GM12878 (cell line): ENCODE measurements at regions of chr22 and their contacts with region 1.

Region 1: GRCh38 chr22:39332441-39333064 is 13.1 kb upstream of the RPL3 start:
- DNase-seq: peak; percentile 36
- ATAC-seq: peak; percentile 93
- H3K4me3 ChIP-seq: no peak overlapping the region
- H3K27ac ChIP-seq: no peak overlapping the region
- H3K4me1 ChIP-seq: no peaks in the 10 kb centered on the region
- H3K27me3 ChIP-seq: no peaks in the 10 kb centered on the region
- CTCF ChIP-seq: no peak
- EP300 ChIP-seq: no peak
- POLR2A ChIP-seq: no peak
- RAD21 ChIP-seq: no peak

Region 2: DNA sequence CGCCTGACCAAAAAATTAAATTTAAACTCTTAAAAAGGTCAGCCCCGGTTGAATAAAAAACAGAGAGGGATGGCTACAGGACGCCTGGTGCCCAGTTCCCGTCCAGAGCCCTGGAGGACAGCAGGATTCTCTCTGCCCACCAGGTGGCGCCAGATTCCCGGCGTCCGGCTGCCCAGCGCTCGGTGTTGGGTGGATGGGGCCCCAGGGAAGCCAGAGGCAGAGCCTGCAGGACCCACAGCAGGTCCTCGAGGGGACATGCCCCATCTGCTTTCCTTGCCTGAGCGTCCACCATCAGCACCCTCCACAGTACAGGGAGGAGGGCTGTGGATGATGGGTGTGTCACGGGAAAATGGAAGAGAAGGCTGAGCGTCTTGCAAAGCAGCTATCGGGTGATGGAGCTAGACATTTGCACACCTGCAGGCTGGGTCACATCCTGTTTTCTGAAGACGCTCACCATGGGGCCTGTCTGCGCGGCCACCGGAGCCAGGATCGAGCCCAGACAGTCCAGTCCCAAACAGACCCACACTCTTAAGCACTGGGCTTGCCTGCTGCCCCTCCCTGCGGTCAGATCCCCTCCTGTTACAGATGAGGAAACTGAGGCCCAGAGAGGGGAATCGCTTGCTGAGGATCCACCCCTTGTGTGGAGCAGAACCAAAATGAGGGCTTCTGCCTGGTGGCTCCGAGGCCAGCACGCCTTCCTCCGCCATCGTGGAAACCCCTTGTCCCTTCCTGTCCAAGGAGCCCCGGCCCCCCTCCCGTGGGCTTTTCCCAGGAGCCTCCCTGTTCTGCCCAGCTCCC is 161.5 kb before region 1 on chr22:
- CTCF ChIA-PET with region 1: interaction called, 13 read pairs
- POLR2A ChIA-PET with region 1: no interaction called
- RAD21 ChIA-PET with region 1: interaction called, 3 read pairs
- SMC1A ChIA-PET with region 1: interaction called, 7 read pairs
- in situ Hi-C with region 1: no loop called
- intact Hi-C with region 1: no loop called
- DNase-seq: peak; percentile 53
- ATAC-seq: peak; percentile 96
- H3K4me3 ChIP-seq: no peak overlapping the region
- H3K27ac ChIP-seq: no peak overlapping the region
- H3K4me1 ChIP-seq: peaks cover 15% of the 10 kb centered on the region
- H3K27me3 ChIP-seq: no peaks in the 10 kb centered on the region; a peak in 1 of 4 replicates
- CTCF ChIP-seq: peak; percentile 90 to 94 (median 93); a peak in 5 of 6 replicates
- EP300 ChIP-seq: no peak
- POLR2A ChIP-seq: no peak
- RAD21 ChIP-seq: peak; percentile 95

Region 3: DNA sequence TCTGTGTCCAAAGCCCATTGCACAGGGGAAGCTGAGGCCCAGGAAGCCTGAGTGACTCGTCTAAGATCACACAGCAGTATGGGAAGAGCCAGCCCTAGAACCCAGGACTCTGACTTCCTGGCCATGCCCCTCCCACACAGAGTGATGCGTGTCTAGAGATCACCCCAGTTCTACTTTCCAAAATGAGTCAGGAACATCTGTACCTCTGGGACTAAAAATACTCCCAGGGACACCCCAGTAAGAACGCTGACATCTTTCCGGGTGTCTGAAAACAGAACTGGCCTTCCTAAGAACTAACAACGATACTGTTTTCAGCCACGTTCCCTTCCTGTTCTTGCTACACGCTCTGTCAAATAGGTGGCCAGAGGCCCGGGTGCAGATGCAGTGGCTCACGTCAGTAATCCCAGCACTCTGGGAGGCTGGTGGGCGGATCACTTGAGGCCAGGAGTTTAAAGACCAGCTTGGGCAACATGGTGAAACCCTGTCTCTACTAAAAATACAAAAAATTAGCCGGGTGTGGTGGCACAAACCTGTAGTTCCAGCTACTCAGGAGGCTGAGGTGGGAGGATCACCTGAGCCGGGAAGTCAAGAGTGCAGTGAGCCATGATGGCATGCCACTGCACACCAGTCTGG is 66.0 kb before region 1 on chr22:
- CTCF ChIA-PET with region 1: no interaction called
- POLR2A ChIA-PET with region 1: no interaction called
- RAD21 ChIA-PET with region 1: no interaction called
- SMC1A ChIA-PET with region 1: no interaction called
- in situ Hi-C with region 1: no loop called
- intact Hi-C with region 1: no loop called
- DNase-seq: peak; percentile 96
- ATAC-seq: peak; percentile 91
- H3K4me3 ChIP-seq: 0 out of 2 replicates have a peak overlapping the region, but pooled peaks have one; percentile 1
- H3K27ac ChIP-seq: peak overlapping the region; percentile 96
- H3K4me1 ChIP-seq: peaks cover 37% of the 10 kb centered on the region
- H3K27me3 ChIP-seq: no peaks in the 10 kb centered on the region
- CTCF ChIP-seq: no peak
- EP300 ChIP-seq: peak; percentile 76 to 82
- POLR2A ChIP-seq: no peak; the same call in 1 of the 2 replicates
- RAD21 ChIP-seq: no peak

Region 4: DNA sequence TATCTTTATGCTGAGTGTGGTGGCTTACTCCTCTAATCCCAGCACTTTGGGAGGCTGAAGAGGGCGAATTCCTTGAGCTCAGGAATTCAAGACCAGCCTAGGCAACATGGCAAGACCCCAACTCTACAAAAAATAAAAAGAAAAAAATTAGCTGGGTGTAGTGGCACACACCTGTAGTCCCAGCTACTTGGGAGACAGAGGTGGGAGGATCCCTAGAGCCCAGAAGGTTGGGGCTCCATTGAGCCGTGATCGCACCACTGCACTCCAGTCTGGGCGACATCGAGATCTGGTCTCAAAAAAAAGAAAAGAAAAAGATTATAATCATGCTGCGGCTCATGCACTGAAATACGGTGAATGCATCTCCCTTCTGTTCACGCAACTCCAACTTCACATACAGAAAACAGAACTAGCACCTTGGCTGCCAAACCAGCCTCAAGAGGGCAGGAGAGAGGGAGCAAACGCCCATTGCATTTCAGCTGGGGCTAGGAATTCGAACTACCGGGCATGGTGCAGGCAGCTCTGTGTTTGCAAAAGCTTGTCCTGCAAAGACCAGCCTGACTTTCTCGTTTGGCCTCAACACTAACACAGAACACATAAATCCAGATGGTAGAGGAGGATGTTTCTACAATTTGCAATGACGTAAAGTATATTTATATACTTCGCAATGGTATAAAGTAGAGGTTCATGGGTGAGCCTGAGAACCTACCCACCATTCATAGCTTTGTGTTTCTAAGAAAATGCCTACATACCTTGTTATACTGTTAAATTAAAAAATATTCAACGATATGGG is 10.9 kb after region 1 on chr22:
- CTCF ChIA-PET with region 1: interaction called, 36 read pairs
- POLR2A ChIA-PET with region 1: no interaction called
- RAD21 ChIA-PET with region 1: interaction called, 7 read pairs
- SMC1A ChIA-PET with region 1: interaction called, 16 read pairs
- in situ Hi-C with region 1: no loop called
- intact Hi-C with region 1: no loop called
- DNase-seq: peak; percentile 36
- ATAC-seq: peak; percentile 95
- H3K4me3 ChIP-seq: no peak overlapping the region
- H3K27ac ChIP-seq: no peak overlapping the region
- H3K4me1 ChIP-seq: no peaks in the 10 kb centered on the region
- H3K27me3 ChIP-seq: peaks cover 0 to 1% of the 10 kb centered on the region in 2 experiments; a peak in 2 of 4 replicates
- CTCF ChIP-seq: peak; percentile 77 to 89 (median 80)
- EP300 ChIP-seq: no peak
- POLR2A ChIP-seq: no peak
- RAD21 ChIP-seq: peak; percentile 72

Region 5: GRCh38 chr22:39349506-39349966 is 17.0 kb after region 1 on chr22:
- CTCF ChIA-PET with region 1: interaction called, 36 read pairs
- POLR2A ChIA-PET with region 1: no interaction called
- RAD21 ChIA-PET with region 1: interaction called, 7 read pairs
- SMC1A ChIA-PET with region 1: interaction called, 3 read pairs
- in situ Hi-C with region 1: no loop called
- intact Hi-C with region 1: no loop called
- DNase-seq: no peak
- ATAC-seq: peak; percentile 31
- H3K4me3 ChIP-seq: peak overlapping the region; percentile 49; the same call in 1 of the 2 replicates
- H3K27ac ChIP-seq: no peak overlapping the region
- H3K4me1 ChIP-seq: peaks cover 7% of the 10 kb centered on the region
- H3K27me3 ChIP-seq: peaks cover 0 to 1% of the 10 kb centered on the region in 2 experiments; a peak in 1 of 4 replicates
- CTCF ChIP-seq: no peak; a peak in 1 of 6 replicates
- EP300 ChIP-seq: 0 out of 4 replicates have a peak, but pooled peaks of 1 of the 2 experiments have one; percentile 8
- POLR2A ChIP-seq: 0 out of 2 replicates have a peak, but pooled peaks have one; percentile 20
- RAD21 ChIP-seq: no peak

Region 6: DNA sequence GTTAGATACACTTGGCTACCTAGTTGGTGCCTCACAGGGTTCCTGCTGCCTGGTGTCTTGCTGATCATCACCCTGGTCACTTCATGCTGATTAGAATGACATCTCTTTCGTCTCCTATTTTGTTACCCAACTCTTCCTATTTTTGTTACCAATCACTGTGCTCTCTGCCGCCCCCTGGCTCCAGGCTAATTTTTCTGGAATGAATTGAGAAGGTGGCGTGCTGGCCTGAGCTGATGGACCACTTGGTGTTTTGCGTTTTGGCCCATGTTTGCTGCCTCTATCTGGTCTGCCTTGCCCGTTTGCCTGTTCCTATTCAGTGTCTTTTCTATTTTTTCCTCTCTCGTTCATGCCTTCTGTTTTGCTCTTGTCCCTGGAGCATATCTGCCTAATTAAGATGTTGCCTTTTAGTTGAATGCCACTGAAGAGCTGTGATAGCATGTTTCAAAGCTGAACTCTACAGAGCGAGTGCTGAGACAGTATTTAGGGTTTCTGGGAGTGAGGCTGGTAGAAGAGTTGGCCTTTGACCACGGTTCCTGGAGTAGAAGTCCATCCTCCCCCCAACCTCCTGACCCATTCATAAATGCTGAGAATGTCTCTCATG is 181.9 kb after region 1 on chr22:
- CTCF ChIA-PET with region 1: interaction called, 15 read pairs
- POLR2A ChIA-PET with region 1: interaction called, 4 read pairs
- RAD21 ChIA-PET with region 1: interaction called, 4 read pairs
- SMC1A ChIA-PET with region 1: no interaction called
- in situ Hi-C with region 1: no loop called
- intact Hi-C with region 1: no loop called
- DNase-seq: no peak
- ATAC-seq: peak; percentile 59
- H3K4me3 ChIP-seq: no peak overlapping the region
- H3K27ac ChIP-seq: no peak overlapping the region
- H3K4me1 ChIP-seq: peaks cover 16% of the 10 kb centered on the region
- H3K27me3 ChIP-seq: no peaks in the 10 kb centered on the region
- CTCF ChIP-seq: peak; percentile 66 to 74 (median 70)
- EP300 ChIP-seq: no peak
- POLR2A ChIP-seq: no peak
- RAD21 ChIP-seq: peak; percentile 51